Psoas muscle (tissue), 8 donors: ENCODE measurements at regions of chr1 and their contacts with region 1.

Region 1: GRCh38 chr1:76876655-76877395 is 9.5 kb downstream of the ST6GALNAC5 start:
- DNase-seq: no peak
- ATAC-seq: no peak
- H3K4me3 ChIP-seq: no peak overlapping the region
- H3K27ac ChIP-seq: no peak overlapping the region
- H3K4me1 ChIP-seq: no peaks in the 10 kb centered on the region
- H3K27me3 ChIP-seq: peaks cover 0 to 3% (median 0%) of the 10 kb centered on the region in 3 donors
- CTCF ChIP-seq: no peak

Region 2: GRCh38 chr1:76343356-76343755 is 533.5 kb before region 1 on chr1:
- intact Hi-C with region 1: no loop called
- DNase-seq: no peak
- ATAC-seq: no peak
- H3K4me3 ChIP-seq: no peak overlapping the region
- H3K27ac ChIP-seq: no peak overlapping the region
- H3K4me1 ChIP-seq: no peaks in the 10 kb centered on the region
- H3K27me3 ChIP-seq: no peaks in the 10 kb centered on the region
- CTCF ChIP-seq: no peak

Region 3: GRCh38 chr1:76723949-76724348 is 152.9 kb before region 1 on chr1:
- intact Hi-C with region 1: loop called in 1 of 2 experiments (anchors 5 kb)
- DNase-seq: no peak
- ATAC-seq: no peak
- H3K4me3 ChIP-seq: no peak overlapping the region
- H3K27ac ChIP-seq: no peak overlapping the region
- H3K4me1 ChIP-seq: no peaks in the 10 kb centered on the region
- H3K27me3 ChIP-seq: no peaks in the 10 kb centered on the region
- CTCF ChIP-seq: no peak